ENCODE measurements at regions of chr1 and their contacts with region 1.

Region 1: GRCh38 chr1:202781180-202781579 is 27.0 kb downstream of the KDM5B start:
- DNase-seq: no peak
- ATAC-seq: no peak
- H3K4me3 ChIP-seq: no peak overlapping the region
- H3K27ac ChIP-seq: no peak overlapping the region
- H3K4me1 ChIP-seq: no peaks in the 10 kb centered on the region
- H3K27me3 ChIP-seq: no peaks in the 10 kb centered on the region
- CTCF ChIP-seq: no peak
- EP300 ChIP-seq: no peak
- POLR2A ChIP-seq: no peak
- RAD21 ChIP-seq: no peak

Region 2: GRCh38 chr1:202796302-202797069 is 15.3 kb after region 1 on chr1:
- CTCF ChIA-PET with region 1: no interaction called
- POLR2A ChIA-PET with region 1: interaction called, 28 read pairs
- in situ Hi-C with region 1: no loop called
- intact Hi-C with region 1: no loop called
- DNase-seq: no peak
- ATAC-seq: no peak; the same call in 2 of the 3 replicates
- H3K4me3 ChIP-seq: no peak overlapping the region
- H3K27ac ChIP-seq: no peak overlapping the region
- H3K4me1 ChIP-seq: peaks cover 10 to 11% of the 10 kb centered on the region in 2 experiments; a peak in 3 of 5 replicates
- H3K27me3 ChIP-seq: no peaks in the 10 kb centered on the region
- CTCF ChIP-seq: no peak
- EP300 ChIP-seq: no peak
- POLR2A ChIP-seq: no peak
- RAD21 ChIP-seq: no peak